IMR-90 (cell line): ENCODE measurements at regions of chr1 and their contacts with region 1.

Region 1: GRCh38 chr1:14516974-14517840 is 81.3 kb upstream of the KAZN start:
- DNase-seq: peak; percentile 92
- ATAC-seq: peak; percentile 79
- H3K4me3 ChIP-seq: no peak overlapping the region
- H3K27ac ChIP-seq: peak overlapping the region; percentile 88
- H3K4me1 ChIP-seq: peaks cover 20% of the 10 kb centered on the region
- H3K27me3 ChIP-seq: no peaks in the 10 kb centered on the region
- CTCF ChIP-seq: no peak
- POLR2A ChIP-seq: no peak
- RAD21 ChIP-seq: no peak

Region 2: GRCh38 chr1:14815175-14815877 is 298.1 kb after region 1 on chr1:
- CTCF ChIA-PET with region 1: no interaction called
- POLR2A ChIA-PET with region 1: no interaction called
- dilution Hi-C with region 1: no loop called
- in situ Hi-C with region 1: no loop called
- intact Hi-C with region 1: no loop called
- DNase-seq: peak; percentile 4
- ATAC-seq: no peak
- H3K4me3 ChIP-seq: no peak overlapping the region
- H3K27ac ChIP-seq: no peak overlapping the region
- H3K4me1 ChIP-seq: no peaks in the 10 kb centered on the region; the same call in 1 of the 2 replicates
- H3K27me3 ChIP-seq: no peaks in the 10 kb centered on the region; the same call in 1 of the 2 replicates
- CTCF ChIP-seq: no peak
- POLR2A ChIP-seq: no peak
- RAD21 ChIP-seq: no peak

Region 3: GRCh38 chr1:14923727-14924452 is 406.7 kb after region 1 on chr1:
- CTCF ChIA-PET with region 1: no interaction called
- POLR2A ChIA-PET with region 1: no interaction called
- dilution Hi-C with region 1: no loop called
- in situ Hi-C with region 1: no loop called
- intact Hi-C with region 1: loop called (anchors 5 kb)
- DNase-seq: peak; percentile 71
- ATAC-seq: peak; percentile 73
- H3K4me3 ChIP-seq: peak overlapping the region; percentile 79
- H3K27ac ChIP-seq: peak overlapping the region; percentile 40; the same call in 1 of the 2 replicates
- H3K4me1 ChIP-seq: peaks cover 20% of the 10 kb centered on the region
- H3K27me3 ChIP-seq: no peaks in the 10 kb centered on the region; the same call in 1 of the 2 replicates
- CTCF ChIP-seq: no peak
- POLR2A ChIP-seq: no peak
- RAD21 ChIP-seq: no peak